A549 (cell line): ENCODE measurements at regions of chr1 and their contacts with region 1.

Region 1: GRCh38 chr1:234326497-234327366 is 46.5 kb upstream of the COA6 start:
- DNase-seq: peak; percentile 62 to 66
- ATAC-seq: peak; percentile 92 to 95
- H3K4me3 ChIP-seq: 0 out of 3 replicates have a peak overlapping the region, but pooled peaks have one; percentile 24
- H3K27ac ChIP-seq: peak overlapping the region; percentile 21 to 63; a peak in 2 of 6 replicates
- H3K4me1 ChIP-seq: 0 out of 3 replicates have a peak, but pooled peaks cover 5% of the 10 kb centered on the region
- CTCF ChIP-seq: peak; percentile 82
- EP300 ChIP-seq: no peak
- POLR2A ChIP-seq: no peak
- RAD21 ChIP-seq: peak; percentile 71 to 73

Region 2: GRCh38 chr1:234125283-234125682 is 201.4 kb before region 1 on chr1:
- CTCF ChIA-PET with region 1: interaction called, 31 read pairs
- POLR2A ChIA-PET with region 1: no interaction called
- DNase-seq: peak in 1 of 2 experiments; percentile 72
- ATAC-seq: peak; percentile 73 to 94; a peak in 5 of 6 replicates
- H3K4me3 ChIP-seq: no peak overlapping the region
- H3K27ac ChIP-seq: peak overlapping the region in 1 of 2 experiments; percentile 38; a peak in 2 of 6 replicates
- H3K4me1 ChIP-seq: peaks cover 28% of the 10 kb centered on the region
- CTCF ChIP-seq: peak; percentile 44
- EP300 ChIP-seq: no peak
- POLR2A ChIP-seq: no peak
- RAD21 ChIP-seq: peak; percentile 69 to 79

Region 3: DNA sequence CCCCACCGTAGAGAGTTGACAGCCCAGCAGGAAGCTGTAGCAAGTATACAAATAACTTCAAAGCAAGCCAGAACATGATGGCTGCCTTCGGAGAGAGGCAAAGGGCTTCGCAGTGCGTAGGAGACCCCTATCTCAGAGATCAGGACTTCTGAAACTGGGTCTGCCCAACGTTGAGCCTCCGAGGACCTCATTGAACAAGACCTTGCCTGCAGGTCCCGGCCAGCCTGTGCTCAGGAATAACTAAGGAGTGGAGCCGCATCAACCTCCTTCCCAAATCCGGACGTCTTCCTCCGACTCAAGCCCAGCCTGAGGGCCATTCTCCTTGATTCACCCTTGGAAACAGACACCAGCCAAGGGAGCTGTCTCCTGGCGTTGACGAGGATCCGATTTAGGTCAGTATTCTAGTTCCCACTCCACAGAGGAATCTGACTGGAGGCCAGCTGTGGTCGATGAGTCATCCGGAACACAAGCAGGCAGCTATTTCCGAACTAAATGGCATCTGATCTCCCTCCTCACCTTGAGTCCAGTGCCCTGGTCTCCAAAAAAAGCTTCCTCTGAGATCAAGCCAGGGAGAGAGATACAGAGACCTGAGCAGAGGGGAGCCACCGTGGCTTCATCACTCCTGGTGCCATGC is 120.0 kb before region 1 on chr1:
- CTCF ChIA-PET with region 1: no interaction called
- POLR2A ChIA-PET with region 1: no interaction called
- DNase-seq: peak; percentile 56 to 66
- ATAC-seq: peak; percentile 69 to 70
- H3K4me3 ChIP-seq: no peak overlapping the region
- H3K27ac ChIP-seq: peak overlapping the region; percentile 58 to 79; a peak in 5 of 6 replicates
- H3K4me1 ChIP-seq: peaks cover 29% of the 10 kb centered on the region
- CTCF ChIP-seq: no peak
- EP300 ChIP-seq: no peak
- POLR2A ChIP-seq: no peak
- RAD21 ChIP-seq: no peak

Region 4: GRCh38 chr1:234345237-234345636 is 18.5 kb after region 1 on chr1:
- CTCF ChIA-PET with region 1: interaction called, 15 read pairs
- POLR2A ChIA-PET with region 1: no interaction called
- DNase-seq: no peak
- ATAC-seq: no peak
- H3K4me3 ChIP-seq: no peak overlapping the region
- H3K27ac ChIP-seq: no peak overlapping the region
- H3K4me1 ChIP-seq: no peaks in the 10 kb centered on the region
- CTCF ChIP-seq: no peak
- EP300 ChIP-seq: no peak
- POLR2A ChIP-seq: no peak
- RAD21 ChIP-seq: no peak

Region 5: DNA sequence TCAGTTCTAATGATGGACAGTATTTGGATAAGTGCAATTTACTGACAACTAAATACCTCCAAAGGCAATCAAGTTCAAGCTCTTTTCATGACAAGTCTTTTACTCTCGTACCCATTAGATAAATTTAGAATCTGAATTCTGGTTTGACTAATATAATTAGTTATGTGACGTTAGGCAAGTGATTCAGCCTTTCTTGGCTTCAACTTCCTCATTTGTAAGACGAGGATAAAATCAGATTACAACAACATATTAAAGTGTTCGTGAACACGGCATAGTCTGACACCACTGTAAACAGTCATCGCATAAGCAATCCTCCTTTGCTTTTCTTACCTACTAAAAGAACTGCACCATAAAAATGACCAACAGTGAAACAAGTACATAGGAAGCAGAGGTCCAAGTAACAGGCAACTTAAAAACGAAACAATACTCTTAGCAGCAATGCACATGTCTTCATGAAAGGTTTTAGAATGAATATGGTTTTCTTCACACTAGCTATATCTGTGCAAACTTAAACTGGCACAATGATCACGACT is 72.2 kb after region 1 on chr1:
- CTCF ChIA-PET with region 1: no interaction called
- POLR2A ChIA-PET with region 1: no interaction called
- DNase-seq: no peak
- ATAC-seq: no peak
- H3K4me3 ChIP-seq: no peak overlapping the region
- H3K27ac ChIP-seq: no peak overlapping the region
- H3K4me1 ChIP-seq: no peaks in the 10 kb centered on the region
- CTCF ChIP-seq: no peak
- EP300 ChIP-seq: no peak
- POLR2A ChIP-seq: no peak
- RAD21 ChIP-seq: no peak

Region 6: GRCh38 chr1:234499119-234499942 is 172.6 kb after region 1 on chr1:
- CTCF ChIA-PET with region 1: no interaction called
- POLR2A ChIA-PET with region 1: no interaction called
- DNase-seq: peak; percentile 86 to 87
- ATAC-seq: peak; percentile 93 to 94
- H3K4me3 ChIP-seq: no peak overlapping the region
- H3K27ac ChIP-seq: peak overlapping the region; percentile 88 to 94
- H3K4me1 ChIP-seq: peaks cover 74% of the 10 kb centered on the region
- CTCF ChIP-seq: peak; percentile 95
- EP300 ChIP-seq: no peak
- POLR2A ChIP-seq: no peak
- RAD21 ChIP-seq: peak; percentile 98 to 100